Activated CD4-positive, alpha-beta T cell treated with anti-CD3 and anti-CD28 coated beads for 36 hours (primary cell): ENCODE measurements at regions of chr5 and their contacts with region 1.

Region 1: DNA sequence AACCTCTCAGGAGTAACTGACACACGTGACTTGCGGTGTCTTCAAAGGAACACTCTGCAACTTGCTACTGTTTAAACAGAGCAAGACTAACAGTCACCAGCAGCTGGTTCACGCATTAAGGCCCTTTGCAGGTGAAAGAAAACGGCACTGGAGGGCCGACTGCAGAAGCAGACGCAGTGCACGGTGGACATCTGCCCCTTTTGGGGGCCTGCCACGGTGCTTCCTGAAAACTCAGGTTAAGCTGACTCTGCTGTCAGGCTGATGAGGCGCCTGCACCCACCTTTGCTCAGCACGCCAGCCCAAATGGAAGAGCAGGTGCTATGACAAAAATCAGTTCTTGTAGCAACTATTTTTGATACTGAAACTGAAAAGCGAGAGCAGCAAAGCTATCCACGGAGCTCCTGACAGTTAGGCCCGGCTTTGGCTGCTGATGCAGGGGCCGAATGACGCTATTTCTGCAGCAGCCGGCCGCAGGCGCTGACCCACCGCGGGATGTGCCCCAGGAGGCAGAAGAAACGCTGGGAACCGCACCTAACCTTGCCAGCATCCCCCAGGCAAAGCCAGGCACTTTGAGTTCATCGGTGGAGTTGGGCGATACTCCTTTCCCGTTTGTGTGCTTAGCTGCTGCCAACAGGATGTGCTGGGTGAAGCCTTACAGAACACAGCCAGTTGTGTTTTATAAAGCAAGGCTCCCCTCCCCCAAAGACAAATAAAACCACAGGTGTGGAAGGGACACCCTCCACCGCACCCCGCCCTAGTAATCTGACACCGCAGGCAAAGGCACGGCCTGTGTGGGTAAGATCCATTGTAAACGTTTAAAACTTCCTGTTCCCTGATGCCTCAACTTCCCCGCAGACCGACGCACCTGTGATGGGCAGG is 21.1 kb upstream of the TERT start:
- DNase-seq: peak; percentile 74
- ATAC-seq: peak; percentile 68
- H3K4me3 Mint-ChIP-seq: peak overlapping the region; percentile 49
- H3K27ac Mint-ChIP-seq: peak overlapping the region; percentile 89
- H3K4me1 Mint-ChIP-seq: peaks cover 61% of the 10 kb centered on the region
- H3K27me3 Mint-ChIP-seq: no peaks in the 10 kb centered on the region

Region 2: GRCh38 chr5:892394-893136 is 423.4 kb before region 1 on chr5 and contains the starts of genes BRD9 and TRIP13:
- CTCF ChIA-PET with region 1: no interaction called
- POLR2A ChIA-PET with region 1: no interaction called
- intact Hi-C with region 1: no loop called
- DNase-seq: peak; percentile 93
- ATAC-seq: peak; percentile 98
- H3K4me3 Mint-ChIP-seq: peak within 1 kb of the TSS; percentile 90
- H3K27ac Mint-ChIP-seq: peak within 1 kb of the TSS; percentile 85
- H3K4me1 Mint-ChIP-seq: peaks cover 36% of the 10 kb centered on the region
- H3K27me3 Mint-ChIP-seq: no peaks in the 10 kb centered on the region
- total RNA-seq, gene BRD9: 46.7 to 49.7 TPM
- total RNA-seq, gene TRIP13: 34.4 to 34.7 TPM

Region 3: GRCh38 chr5:1294835-1295649 is 20.9 kb before region 1 on chr5 and contains the start of gene TERT:
- CTCF ChIA-PET with region 1: interaction called, 4 read pairs
- POLR2A ChIA-PET with region 1: no interaction called
- intact Hi-C with region 1: loop called in 1 of 2 experiments (anchors 1 kb)
- DNase-seq: peak; percentile 90
- ATAC-seq: peak; percentile 88
- H3K4me3 Mint-ChIP-seq: peak within 1 kb of the TSS; percentile 55
- H3K27ac Mint-ChIP-seq: no peak within 1 kb of the TSS
- H3K4me1 Mint-ChIP-seq: peaks cover 11% of the 10 kb centered on the region
- H3K27me3 Mint-ChIP-seq: no peaks in the 10 kb centered on the region
- total RNA-seq, gene TERT: 8.5 to 11.9 TPM